OCI-LY7 (cell line): ENCODE measurements at regions of chr12 and their contacts with region 1.

Region 1: GRCh38 chr12:6688999-6689882 is at the start of gene ZNF384:
- DNase-seq: peak; percentile 100
- H3K4me3 ChIP-seq: peak within 1 kb of the TSS; percentile 86
- H3K27ac ChIP-seq: peak within 1 kb of the TSS; percentile 78
- H3K4me1 ChIP-seq: peaks cover 65% of the 10 kb centered on the region
- CTCF ChIP-seq: no peak
- total RNA-seq, gene ZNF384: 48.2 and 48.6 TPM in 2 replicates

Region 2: DNA sequence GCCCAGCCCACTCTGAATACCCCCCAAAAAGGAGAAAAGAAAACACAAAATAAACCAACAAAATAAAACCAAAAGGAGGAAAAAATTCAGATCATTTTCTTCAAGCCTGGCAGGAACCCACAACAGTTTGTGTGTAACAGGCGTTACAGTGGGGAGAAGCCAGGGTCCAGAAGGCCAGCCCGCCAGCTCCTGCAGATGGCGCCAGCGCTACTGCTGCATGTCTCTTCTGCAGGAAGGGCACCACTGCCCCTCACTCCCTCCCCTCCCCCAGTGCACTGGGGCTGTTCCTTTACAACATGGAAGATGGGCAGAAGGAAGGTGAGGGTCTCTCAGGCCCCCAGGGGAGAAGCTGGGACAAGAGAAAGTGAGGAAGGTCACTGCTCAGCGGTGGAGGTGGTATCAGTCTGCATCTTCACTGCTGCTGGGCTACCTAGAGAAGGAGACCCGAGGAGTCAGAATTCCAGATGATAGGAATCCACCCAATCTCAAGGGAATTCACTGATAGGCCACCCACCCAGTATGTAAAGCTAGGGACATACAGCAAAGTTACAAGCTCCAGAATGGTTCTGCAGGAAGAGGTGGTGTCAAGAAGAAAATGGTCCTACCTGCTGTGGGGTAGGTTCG is 118.9 kb before region 1 on chr12:
- CTCF ChIA-PET with region 1: no interaction called
- POLR2A ChIA-PET with region 1: no interaction called
- intact Hi-C with region 1: loop called (anchors 5 kb)
- DNase-seq: peak; percentile 69
- H3K4me3 ChIP-seq: no peak overlapping the region
- H3K27ac ChIP-seq: no peak overlapping the region
- H3K4me1 ChIP-seq: peaks cover 21% of the 10 kb centered on the region
- CTCF ChIP-seq: peak; percentile 94

Region 3: GRCh38 chr12:6613776-6614512 is 75.3 kb before region 1 on chr12:
- CTCF ChIA-PET with region 1: interaction called, 3 read pairs
- POLR2A ChIA-PET with region 1: interaction called, 4 read pairs
- intact Hi-C with region 1: loop called (anchors 2 kb)
- DNase-seq: peak; percentile 42
- H3K4me3 ChIP-seq: no peak overlapping the region
- H3K27ac ChIP-seq: peak overlapping the region; percentile 18
- H3K4me1 ChIP-seq: peaks cover 36% of the 10 kb centered on the region
- CTCF ChIP-seq: peak; percentile 48; the same call in 1 of the 2 replicates

Region 4: GRCh38 chr12:6662906-6663742 is 26.1 kb before region 1 on chr12 and contains the start of gene ING4:
- CTCF ChIA-PET with region 1: interaction called, 3 read pairs
- POLR2A ChIA-PET with region 1: interaction called, 9 read pairs
- intact Hi-C with region 1: loop called (anchors 1 kb)
- DNase-seq: peak; percentile 100
- H3K4me3 ChIP-seq: peak within 1 kb of the TSS; percentile 79
- H3K27ac ChIP-seq: peak within 1 kb of the TSS; percentile 67
- H3K4me1 ChIP-seq: peaks cover 19% of the 10 kb centered on the region
- CTCF ChIP-seq: no peak
- total RNA-seq, gene ING4: 27.1 and 38.1 TPM in 2 replicates

Region 5: GRCh38 chr12:6708960-6709394 is 19.7 kb after region 1 on chr12:
- CTCF ChIA-PET with region 1: no interaction called
- POLR2A ChIA-PET with region 1: no interaction called
- intact Hi-C with region 1: no loop called
- DNase-seq: no peak
- H3K4me3 ChIP-seq: no peak overlapping the region
- H3K27ac ChIP-seq: no peak overlapping the region
- H3K4me1 ChIP-seq: peaks cover 6% of the 10 kb centered on the region
- CTCF ChIP-seq: no peak

Region 6: DNA sequence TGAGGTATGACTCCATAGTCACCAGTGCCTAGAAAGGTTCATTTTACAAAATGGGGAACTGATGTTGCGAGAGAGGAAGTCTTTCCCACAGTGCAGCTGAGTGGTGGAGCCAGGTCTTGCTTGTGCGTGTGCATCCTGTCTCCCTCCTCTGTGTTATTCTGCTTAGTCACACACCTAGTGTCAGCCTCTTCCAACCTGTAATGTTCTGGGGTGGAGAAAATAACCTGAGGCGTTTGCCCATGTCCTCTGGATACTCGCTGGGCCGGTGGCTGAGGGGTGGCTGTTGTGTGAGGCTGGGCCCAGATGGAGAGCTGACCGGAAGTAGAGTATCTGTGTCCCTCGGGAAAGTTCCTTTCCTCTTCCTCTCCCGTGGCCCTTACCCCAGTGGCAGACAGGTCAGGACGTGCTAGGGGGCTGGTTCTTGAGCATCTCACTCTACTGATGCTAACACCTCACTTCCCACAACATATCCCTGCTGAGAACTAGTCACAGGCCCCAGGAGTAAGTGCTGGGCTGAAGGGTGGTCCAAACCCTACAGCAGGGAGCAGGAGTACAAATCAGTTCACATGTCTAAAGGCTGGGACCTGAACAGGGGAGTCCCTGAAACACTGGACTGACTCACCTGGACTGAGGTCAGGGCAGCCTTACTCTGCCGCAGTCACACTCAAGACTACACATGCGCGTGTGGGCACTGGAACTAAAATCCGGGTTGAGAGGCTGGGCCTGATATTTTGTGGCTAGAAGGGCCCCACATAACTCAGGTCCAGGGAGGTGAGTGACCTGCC is 56.7 kb after region 1 on chr12:
- CTCF ChIA-PET with region 1: no interaction called
- POLR2A ChIA-PET with region 1: no interaction called
- intact Hi-C with region 1: no loop called
- DNase-seq: peak; percentile 73
- H3K4me3 ChIP-seq: no peak overlapping the region
- H3K27ac ChIP-seq: no peak overlapping the region
- H3K4me1 ChIP-seq: peaks cover 14% of the 10 kb centered on the region
- CTCF ChIP-seq: no peak

Region 7: GRCh38 chr12:6825398-6826124 is 136.3 kb after region 1 on chr12:
- CTCF ChIA-PET with region 1: interaction called, 10 read pairs
- POLR2A ChIA-PET with region 1: no interaction called
- intact Hi-C with region 1: no loop called
- DNase-seq: peak; percentile 71
- H3K4me3 ChIP-seq: no peak overlapping the region
- H3K27ac ChIP-seq: no peak overlapping the region
- H3K4me1 ChIP-seq: peaks cover 32% of the 10 kb centered on the region
- CTCF ChIP-seq: peak; percentile 91